ENCODE measurements at regions of chr11 and their contacts with region 1.

Region 1: DNA sequence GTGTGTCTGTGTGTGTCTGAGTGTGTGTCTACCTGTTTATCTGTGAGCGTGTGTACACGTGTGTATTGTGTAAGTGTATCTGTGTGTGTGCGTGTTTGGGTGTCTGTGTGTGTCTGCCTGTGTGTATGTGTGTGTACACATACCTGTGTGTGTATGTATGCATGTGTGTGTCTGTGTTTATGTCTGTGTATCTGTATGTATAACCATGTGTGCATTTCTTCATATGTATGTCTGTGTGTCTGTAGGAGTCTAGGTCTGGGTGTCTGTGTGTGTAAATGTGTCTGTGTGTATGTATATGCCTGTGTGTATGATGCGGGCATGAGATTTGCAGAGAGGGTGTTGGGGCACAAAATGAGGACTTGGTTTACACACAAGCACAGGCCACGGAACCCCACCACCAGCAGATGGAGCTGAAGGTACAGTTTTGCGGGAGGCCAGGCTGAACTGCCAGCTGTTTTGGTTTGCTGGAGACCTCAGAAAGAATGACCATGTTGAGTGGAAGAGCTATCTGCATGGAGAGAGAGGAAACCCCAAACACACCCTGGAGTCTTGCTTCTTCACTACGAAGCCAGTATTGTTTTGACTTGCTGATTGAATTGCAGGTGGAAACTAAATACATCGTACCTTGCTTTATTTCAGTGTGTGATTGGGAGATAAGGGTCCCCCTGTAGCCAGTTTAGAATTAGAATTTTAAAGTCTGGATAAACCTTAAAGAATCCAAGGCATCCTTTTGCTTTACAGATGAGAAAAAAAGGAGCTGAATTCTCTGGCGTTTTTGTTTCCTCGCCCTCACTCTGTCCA is 497.2 kb downstream of the NTM start:
- DNase-seq: peak; percentile 70
- H3K4me3 ChIP-seq: no peak overlapping the region
- H3K27ac ChIP-seq: no peak overlapping the region
- H3K4me1 ChIP-seq: peaks cover 6% of the 10 kb centered on the region
- H3K27me3 ChIP-seq: no peaks in the 10 kb centered on the region
- CTCF ChIP-seq: peak; percentile 95 to 98

Region 2: DNA sequence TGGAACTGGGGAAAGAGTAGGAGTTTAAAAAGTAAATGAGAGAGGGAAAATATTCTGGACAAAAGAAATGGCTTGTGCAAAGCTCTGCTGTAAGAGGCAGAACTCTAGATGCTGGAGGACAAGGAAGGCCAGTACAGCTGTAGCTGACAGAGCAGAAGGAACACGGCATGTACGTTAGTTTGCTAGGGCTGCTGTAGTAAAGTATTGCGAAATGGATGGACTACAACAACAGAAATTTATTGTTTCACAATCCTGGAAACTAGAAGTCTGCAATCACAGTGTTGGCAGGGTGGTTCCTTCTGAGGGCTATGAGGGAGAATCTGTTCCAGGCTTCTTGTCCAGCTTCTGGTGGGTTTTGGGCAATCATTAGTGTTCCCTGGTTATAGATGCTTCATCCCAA is 42.9 kb before region 1 on chr11:
- CTCF ChIA-PET with region 1: no interaction called
- dilution Hi-C with region 1: no loop called
- in situ Hi-C with region 1: no loop called
- intact Hi-C with region 1: no loop called
- DNase-seq: peak; percentile 12
- H3K4me3 ChIP-seq: no peak overlapping the region
- H3K27ac ChIP-seq: no peak overlapping the region
- H3K4me1 ChIP-seq: no peaks in the 10 kb centered on the region
- H3K27me3 ChIP-seq: no peaks in the 10 kb centered on the region
- CTCF ChIP-seq: no peak

Region 3: DNA sequence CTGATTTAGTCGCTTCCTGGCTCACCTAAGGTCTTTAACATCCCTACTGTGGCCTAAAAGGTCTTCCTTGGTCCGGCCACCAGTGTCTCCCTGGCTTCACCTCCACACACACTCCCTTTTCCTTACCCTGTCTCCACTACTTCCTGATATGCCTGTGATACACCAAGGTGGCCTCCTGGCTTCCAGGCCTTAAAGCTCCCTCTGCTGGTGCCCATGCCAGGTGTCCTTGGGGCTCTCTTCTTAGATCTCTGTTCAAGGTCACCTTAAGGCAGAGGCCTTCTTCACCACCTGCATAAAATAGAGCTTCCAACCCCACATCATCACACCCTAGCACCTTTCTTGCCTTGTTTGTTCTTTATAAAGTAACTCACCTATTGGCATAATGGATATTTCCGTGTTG is 290.4 kb after region 1 on chr11:
- CTCF ChIA-PET with region 1: no interaction called
- dilution Hi-C with region 1: no loop called
- in situ Hi-C with region 1: no loop called
- intact Hi-C with region 1: loop called (anchors 1 kb)
- DNase-seq: peak; percentile 30
- H3K4me3 ChIP-seq: no peak overlapping the region
- H3K27ac ChIP-seq: no peak overlapping the region
- H3K4me1 ChIP-seq: peaks cover 16% of the 10 kb centered on the region
- H3K27me3 ChIP-seq: no peaks in the 10 kb centered on the region
- CTCF ChIP-seq: peak; percentile 49 to 73

Region 4: GRCh38 chr11:132402071-132402684 is 534.5 kb after region 1 on chr11:
- CTCF ChIA-PET with region 1: no interaction called
- dilution Hi-C with region 1: no loop called
- in situ Hi-C with region 1: no loop called
- intact Hi-C with region 1: loop called (anchors 1 kb)
- DNase-seq: peak; percentile 39
- H3K4me3 ChIP-seq: no peak overlapping the region
- H3K27ac ChIP-seq: no peak overlapping the region
- H3K4me1 ChIP-seq: no peaks in the 10 kb centered on the region
- H3K27me3 ChIP-seq: no peaks in the 10 kb centered on the region
- CTCF ChIP-seq: peak; percentile 62 to 71

Measured in mammary epithelial cell (primary cell).